ENCODE measurements at regions of chr5 and their contacts with region 1.

Region 1: DNA sequence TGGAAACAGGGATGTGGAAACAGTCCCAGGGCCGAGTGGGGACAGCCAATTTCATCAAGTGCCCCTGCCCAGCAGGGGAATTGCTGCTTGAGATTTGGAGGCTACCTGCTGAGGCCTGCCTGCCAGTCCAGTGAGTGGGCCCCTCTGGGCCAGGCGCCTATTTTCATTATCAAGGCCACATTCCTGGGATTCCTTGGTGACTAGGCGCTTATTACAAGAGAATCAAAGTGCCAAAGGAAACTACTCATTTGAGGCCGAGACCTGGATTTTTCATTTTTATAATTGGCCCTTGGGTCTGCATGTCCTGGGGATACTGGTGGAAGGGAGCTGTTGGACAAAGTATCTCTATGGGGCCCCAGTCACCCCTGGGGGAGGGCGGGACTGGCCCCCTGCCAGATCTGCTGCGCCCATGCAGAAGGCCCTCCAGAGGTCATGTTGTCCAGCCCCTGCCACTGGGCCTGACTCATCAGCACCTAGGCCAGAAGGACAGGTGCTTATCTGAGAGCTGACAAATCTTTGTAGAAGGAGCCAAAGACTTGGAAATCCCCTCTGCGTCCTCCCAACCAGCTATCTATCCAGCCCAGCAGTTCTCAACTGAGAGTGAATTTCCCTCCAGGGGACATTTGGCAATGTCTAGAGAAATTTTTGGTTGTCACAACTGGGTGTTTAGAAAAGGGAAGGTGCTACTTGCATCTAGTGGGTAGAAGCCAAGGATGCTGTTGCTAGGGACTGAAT is 45.6 kb downstream of the FOXI1 start:
- DNase-seq: peak; percentile 100
- H3K4me3 ChIP-seq: no peak overlapping the region; the same call in 1 of the 2 replicates
- H3K27ac ChIP-seq: peak overlapping the region; percentile 91
- H3K4me1 ChIP-seq: peaks cover 55% of the 10 kb centered on the region
- H3K27me3 ChIP-seq: no peaks in the 10 kb centered on the region
- CTCF ChIP-seq: no peak

Region 2: GRCh38 chr5:169695919-169696490 is 455.3 kb before region 1 on chr5:
- CTCF ChIA-PET with region 1: no interaction called
- POLR2A ChIA-PET with region 1: interaction called, 11 read pairs
- intact Hi-C with region 1: no loop called
- DNase-seq: peak; percentile 28 to 82
- H3K4me3 ChIP-seq: peak overlapping the region; percentile 21; the same call in 1 of the 2 replicates
- H3K27ac ChIP-seq: peak overlapping the region; percentile 57
- H3K4me1 ChIP-seq: peaks cover 32% of the 10 kb centered on the region
- H3K27me3 ChIP-seq: no peaks in the 10 kb centered on the region
- CTCF ChIP-seq: no peak

Region 3: GRCh38 chr5:170120576-170120975 is 30.7 kb before region 1 on chr5:
- CTCF ChIA-PET with region 1: no interaction called
- POLR2A ChIA-PET with region 1: no interaction called
- intact Hi-C with region 1: loop called (anchors 1 kb)
- DNase-seq: peak; percentile 18 to 76
- H3K4me3 ChIP-seq: no peak overlapping the region
- H3K27ac ChIP-seq: peak overlapping the region; percentile 66
- H3K4me1 ChIP-seq: peaks cover 23% of the 10 kb centered on the region
- H3K27me3 ChIP-seq: no peaks in the 10 kb centered on the region
- CTCF ChIP-seq: no peak

Region 4: DNA sequence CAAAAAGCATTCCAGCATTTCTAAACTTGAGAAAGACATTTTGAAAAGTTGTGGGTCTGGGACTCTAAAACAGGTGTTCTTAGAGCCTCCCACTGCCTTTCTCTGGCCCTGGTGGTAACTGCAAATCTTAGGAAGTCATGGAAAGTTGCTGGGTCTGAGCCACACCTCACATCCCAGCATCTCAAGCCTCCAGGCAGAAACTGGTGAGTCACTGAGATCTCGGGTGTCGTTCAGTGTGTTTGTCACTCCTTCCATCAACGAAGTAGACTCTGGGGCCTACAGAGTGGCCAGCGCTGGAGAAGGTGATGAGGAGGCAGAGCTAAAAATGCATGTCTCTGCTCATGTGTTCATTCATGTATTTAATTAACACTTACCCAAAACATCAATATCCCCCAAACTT is 22.0 kb after region 1 on chr5:
- CTCF ChIA-PET with region 1: no interaction called
- POLR2A ChIA-PET with region 1: interaction called, 5 read pairs
- intact Hi-C with region 1: loop called (anchors 1 kb)
- DNase-seq: peak; percentile 79 to 90
- H3K4me3 ChIP-seq: no peak overlapping the region
- H3K27ac ChIP-seq: peak overlapping the region; percentile 93
- H3K4me1 ChIP-seq: peaks cover 51% of the 10 kb centered on the region
- H3K27me3 ChIP-seq: no peaks in the 10 kb centered on the region
- CTCF ChIP-seq: no peak

Region 5: DNA sequence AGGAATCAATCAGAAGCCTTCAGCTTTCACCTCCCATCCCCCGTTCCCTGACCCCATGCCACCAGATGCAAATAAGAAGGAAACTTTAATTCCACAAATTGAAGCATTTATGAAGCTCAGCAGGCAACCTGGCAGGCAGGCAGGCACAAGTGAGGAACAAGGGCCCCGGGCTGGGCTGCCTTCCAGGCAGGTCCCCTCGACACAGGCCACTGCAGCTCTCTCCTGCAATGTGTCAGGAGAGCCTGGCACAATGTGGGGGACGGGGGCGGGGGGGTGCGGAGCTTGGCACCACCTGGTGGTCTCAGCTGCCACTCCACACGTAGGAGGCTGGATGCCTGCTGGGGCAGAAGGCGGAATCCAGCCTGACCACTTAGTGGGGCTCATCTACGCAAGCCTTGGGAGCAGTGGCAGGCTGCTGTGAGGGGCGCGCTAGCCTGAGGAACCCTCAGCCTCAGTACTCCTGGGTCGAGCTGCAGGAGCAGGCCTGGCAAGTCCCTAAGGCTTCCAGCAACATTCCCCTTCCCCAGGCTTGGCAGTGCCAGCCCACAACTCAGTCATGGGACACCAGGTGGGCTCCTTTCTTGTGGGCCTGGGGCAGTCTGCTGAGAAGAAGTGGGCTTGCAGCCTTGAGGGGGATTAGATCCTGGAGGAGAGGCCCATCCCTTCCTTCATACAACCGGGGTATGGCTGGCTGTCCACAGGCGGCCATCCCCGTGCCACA is 288.1 kb after region 1 on chr5:
- CTCF ChIA-PET with region 1: no interaction called
- POLR2A ChIA-PET with region 1: no interaction called
- intact Hi-C with region 1: no loop called
- DNase-seq: no peak
- H3K4me3 ChIP-seq: no peak overlapping the region
- H3K27ac ChIP-seq: no peak overlapping the region
- H3K4me1 ChIP-seq: no peaks in the 10 kb centered on the region
- H3K27me3 ChIP-seq: no peaks in the 10 kb centered on the region
- CTCF ChIP-seq: no peak

Region 6: GRCh38 chr5:170757182-170757601 is 605.9 kb after region 1 on chr5:
- CTCF ChIA-PET with region 1: no interaction called
- POLR2A ChIA-PET with region 1: no interaction called
- intact Hi-C with region 1: loop called (anchors 5 kb)
- DNase-seq: peak; percentile 45 to 96
- H3K4me3 ChIP-seq: no peak overlapping the region
- H3K27ac ChIP-seq: peak overlapping the region; percentile 74
- H3K4me1 ChIP-seq: peaks cover 66% of the 10 kb centered on the region
- H3K27me3 ChIP-seq: no peaks in the 10 kb centered on the region
- CTCF ChIP-seq: no peak